KBM-7 (cell line): ENCODE measurements at regions of chr20 and their contacts with region 1.

Region 1: GRCh38 chr20:36439040-36439730 is 102.1 kb upstream of the MYL9 start:
- DNase-seq: peak; percentile 67

Region 2: DNA sequence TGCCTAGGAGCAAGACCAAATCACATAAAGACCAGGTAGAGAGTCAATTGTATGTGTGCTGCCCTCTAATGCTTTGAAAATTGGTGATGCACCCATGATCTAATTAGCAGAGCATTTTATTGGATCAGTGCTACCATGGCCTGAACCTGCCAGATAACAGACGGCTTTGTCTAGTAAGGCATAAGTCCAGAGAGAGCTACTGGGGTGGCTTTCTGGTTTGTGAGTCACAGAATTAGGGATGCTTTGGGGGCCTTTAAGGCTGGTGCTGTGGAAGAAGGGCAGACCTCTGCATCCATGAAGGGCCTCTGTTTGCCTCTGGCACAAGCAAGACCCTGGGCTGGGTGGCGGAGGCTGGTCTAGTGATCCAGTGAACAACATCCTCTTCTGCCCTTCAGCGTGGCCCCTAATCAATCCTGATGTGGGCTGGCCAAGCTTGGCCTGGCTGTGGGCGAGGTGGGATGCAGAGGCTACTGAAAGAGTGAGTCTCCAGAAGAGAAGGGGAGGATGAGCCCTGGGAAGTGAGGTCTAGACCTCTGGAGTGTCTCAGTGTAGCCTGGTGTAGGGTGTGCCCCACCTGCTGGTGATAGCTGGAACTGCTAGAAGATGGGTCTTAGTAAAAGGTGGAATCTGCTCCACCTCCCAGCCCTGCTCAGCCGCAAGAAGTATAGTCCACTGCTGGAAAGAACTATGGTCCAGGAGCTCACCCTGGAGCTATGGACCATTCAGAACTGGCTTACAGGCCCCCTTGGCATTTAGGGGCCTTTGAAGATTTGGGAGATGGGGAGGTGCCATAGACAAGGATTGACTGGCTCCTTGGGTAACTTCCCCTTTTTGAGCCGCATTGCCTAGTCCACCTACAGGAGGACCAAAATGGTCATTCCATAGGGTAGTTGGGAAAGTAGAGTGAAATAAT is 239.6 kb before region 1 on chr20:
- in situ Hi-C with region 1: loop called (anchors 25 kb)
- DNase-seq: peak; percentile 89

Region 3: DNA sequence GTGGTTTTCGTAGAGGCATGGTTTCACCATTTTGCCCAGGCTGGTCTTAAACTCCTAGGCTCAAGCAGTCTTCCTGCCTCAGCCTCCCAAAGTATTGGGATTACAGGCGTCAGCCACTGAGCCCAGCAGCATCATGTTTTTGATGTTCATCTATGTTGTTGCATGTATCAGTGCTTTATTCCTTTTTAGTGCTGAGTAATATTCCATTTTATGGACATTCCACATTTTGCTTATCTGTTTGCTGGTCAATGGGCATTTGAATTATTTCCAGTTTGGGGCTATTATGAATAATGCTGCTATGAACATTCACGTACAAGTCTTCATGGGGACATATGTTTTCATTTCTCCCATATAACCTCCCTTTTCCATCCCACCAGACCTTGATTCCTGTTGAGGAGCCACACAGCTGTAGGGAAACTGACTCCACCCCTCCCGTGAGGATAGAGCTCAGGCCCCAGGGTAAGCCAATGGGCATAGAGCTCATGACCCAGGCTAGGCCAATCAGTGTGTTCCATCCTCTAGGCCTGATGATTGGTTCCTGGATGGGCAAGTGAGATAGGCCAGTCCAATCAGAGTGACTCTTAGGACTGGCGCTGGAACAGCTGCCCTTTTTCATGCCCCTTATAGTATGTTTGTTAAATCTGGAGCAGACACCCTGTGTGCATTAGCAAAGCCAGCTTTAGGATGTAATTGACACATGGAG is 83.6 kb before region 1 on chr20:
- in situ Hi-C with region 1: no loop called
- DNase-seq: no peak